Lower leg skin (tissue), 4 donors: ENCODE measurements at regions of chr17 and their contacts with region 1.

Region 1: DNA sequence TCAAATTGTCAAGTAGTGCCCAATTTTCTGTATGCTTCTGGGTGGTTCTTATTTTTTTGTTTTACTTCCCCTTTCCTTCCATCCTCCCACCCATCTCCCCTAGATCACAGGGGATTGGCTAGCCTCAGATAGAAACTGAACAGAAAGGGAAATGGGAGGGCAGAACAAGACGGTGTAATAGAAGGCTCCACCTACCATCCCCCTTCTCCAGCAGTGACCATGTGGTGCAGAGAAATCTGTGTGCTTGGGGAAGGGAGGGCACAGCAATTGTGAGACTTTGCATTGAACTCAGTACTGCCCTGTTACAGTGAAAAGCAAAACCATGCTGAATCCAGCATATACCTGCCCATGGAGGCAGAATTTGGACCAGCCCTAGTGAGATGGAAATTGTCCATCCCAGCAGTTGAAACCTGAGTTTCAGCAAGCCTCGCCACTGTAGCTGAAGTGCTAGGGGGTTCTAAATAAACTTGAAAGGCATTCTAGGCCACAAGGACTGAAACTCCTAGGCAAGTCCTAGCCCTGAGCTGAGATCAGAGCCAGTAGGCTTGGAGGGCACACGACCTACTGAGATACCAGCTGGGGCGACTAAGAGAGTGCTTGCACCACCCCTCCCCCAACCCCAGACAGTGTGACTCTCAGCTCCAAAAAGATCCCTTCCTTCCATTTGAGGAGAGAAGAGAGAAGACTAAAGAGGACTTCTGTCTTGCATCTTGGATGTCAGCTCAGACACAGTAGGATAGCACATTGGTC is 5.2 kb downstream of the SLFN11 start:
- DNase-seq: no peak
- H3K4me3 ChIP-seq: no peak overlapping the region
- CTCF ChIP-seq: no peak
- POLR2A ChIP-seq: no peak

Region 2: GRCh38 chr17:35387496-35387895 is 19.2 kb after region 1 on chr17:
- intact Hi-C with region 1: loop called (anchors 1 kb)
- DNase-seq: no peak
- H3K4me3 ChIP-seq: no peak overlapping the region
- CTCF ChIP-seq: no peak
- POLR2A ChIP-seq: no peak